GM13976 (cell line): ENCODE measurements at regions of chr10 and their contacts with region 1.

Region 1: GRCh38 chr10:119686439-119687191 is 35.4 kb downstream of the BAG3 start:
- DNase-seq: peak; percentile 85
- CTCF ChIP-seq: peak; percentile 90

Region 2: DNA sequence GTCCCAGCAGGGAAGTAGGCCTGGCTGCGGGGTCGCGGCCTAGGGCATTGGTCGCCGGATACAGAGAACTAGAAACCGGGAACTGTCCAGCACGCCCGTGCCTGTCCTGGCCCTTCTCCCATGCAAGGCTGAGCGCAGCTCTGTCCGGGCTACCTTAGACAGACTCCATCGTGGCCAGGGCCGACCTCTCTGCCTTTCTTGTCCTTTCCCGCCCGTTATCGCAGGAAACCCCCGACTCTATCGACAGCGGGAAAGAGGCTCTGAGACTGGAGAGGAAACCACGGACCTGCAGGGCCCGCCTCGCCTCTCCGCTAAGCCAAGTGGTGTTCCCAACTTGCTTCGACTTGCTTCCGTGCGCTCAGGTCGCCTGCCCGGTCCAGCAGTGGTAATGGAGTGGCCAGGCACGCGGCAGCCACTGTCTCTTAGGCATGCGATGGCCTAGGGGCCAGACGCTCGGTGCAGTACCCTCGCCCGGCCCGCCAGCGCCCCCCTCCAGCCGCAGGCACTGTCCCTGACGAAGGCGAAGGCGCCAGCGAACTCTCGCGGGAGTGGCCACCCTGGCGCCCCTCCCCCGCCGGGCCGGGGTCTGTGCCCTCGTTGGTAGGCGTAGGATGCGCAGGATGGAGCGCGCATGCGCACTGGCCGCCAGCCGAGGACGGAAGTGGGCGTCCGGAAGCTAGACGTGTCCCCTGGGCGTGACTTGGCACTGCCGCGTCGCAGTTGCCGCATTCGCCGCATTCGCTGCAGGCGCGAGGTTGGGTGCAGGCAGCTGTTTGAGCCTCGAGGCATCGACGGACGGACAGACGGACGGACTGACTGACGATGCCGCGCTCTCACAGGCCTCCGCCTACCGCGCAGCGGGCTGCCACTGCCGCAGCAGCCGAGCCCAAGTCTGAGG is 131.6 kb after region 1 on chr10:
- in situ Hi-C with region 1: no loop called
- DNase-seq: no peak
- CTCF ChIP-seq: no peak

Region 3: DNA sequence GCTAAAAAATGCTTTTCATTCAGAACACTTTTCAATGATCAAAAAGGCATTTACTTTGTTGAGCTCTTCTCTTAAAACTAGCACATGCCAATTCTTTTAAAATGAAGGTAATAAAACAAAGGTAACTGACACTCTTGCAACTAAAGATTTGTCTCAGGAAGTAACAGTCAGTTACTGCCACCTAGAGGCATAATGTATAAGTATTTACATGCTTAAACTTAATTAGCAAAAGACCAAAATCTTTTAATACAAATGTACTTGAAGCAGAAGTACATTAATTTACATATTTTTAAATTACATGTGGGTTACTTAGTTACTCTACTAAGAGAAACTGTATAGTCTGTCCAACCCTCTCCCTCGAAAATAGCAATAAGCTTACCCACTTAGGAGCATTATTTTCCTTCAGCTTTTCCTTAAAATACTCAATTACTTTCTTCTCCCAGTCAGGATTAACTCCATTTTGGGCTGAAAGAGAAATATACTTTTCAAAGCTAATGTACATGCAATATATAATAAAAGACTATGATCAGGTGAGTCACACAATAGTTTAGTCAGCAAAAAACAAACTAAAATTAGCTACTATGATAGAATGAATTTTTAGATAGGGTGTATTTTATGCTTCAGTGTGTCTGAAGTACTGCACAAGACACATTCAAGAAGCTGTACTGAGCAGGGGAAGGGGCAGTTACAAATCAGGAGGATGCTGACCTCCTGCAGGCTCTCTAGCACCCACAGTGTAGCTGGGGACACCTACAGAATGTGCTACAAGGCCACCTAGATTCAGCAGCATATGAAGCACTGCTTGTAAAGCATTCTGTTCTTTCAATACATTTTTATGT is 173.0 kb after region 1 on chr10:
- in situ Hi-C with region 1: loop called (anchors 10 kb)
- DNase-seq: peak; percentile 43
- CTCF ChIP-seq: peak; percentile 23

Region 4: GRCh38 chr10:120336911-120337540 is 650.4 kb after region 1 on chr10:
- in situ Hi-C with region 1: loop called (anchors 25 kb)
- DNase-seq: peak; percentile 19
- CTCF ChIP-seq: peak; percentile 79